ENCODE measurements at regions of chr10 and their contacts with region 1.

Region 1: GRCh38 chr10:91856637-91857036 is 52.6 kb downstream of the FGFBP3 start:
- DNase-seq: no peak
- H3K4me3 ChIP-seq: no peak overlapping the region
- H3K4me3 Mint-ChIP-seq: no peak overlapping the region
- H3K27ac ChIP-seq: no peak overlapping the region
- H3K27ac Mint-ChIP-seq: peak overlapping the region in 2 of 7 donors; percentile 51 to 65
- H3K4me1 ChIP-seq: no peaks in the 10 kb centered on the region
- H3K4me1 Mint-ChIP-seq: peaks cover 0 to 3% (median 0%) of the 10 kb centered on the region in 4 donors
- H3K27me3 ChIP-seq: no peaks in the 10 kb centered on the region
- H3K27me3 Mint-ChIP-seq: no peaks in the 10 kb centered on the region

Region 2: DNA sequence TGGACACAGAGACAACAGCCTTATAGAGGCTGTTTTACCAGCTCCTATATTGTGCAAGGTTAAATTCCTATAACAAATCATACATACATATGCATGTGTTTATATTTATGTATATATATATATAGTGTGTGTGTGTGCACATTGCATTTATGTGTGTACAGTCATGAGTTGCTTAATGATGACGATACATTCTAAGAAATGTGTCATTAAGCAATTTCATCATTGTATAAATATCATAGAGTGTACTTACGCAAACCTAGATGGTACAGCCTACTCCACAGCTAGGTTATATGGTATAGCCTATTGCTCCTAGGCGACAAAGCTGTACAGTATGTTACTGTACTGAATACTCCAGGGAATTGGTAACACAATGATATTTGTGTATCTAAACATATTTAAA is 88.5 kb before region 1 on chr10:
- CTCF ChIA-PET with region 1: no interaction called
- POLR2A ChIA-PET with region 1: no interaction called
- intact Hi-C with region 1: loop called (anchors 10 kb)
- DNase-seq: no peak
- H3K4me3 ChIP-seq: no peak overlapping the region
- H3K4me3 Mint-ChIP-seq: no peak overlapping the region
- H3K27ac ChIP-seq: no peak overlapping the region
- H3K27ac Mint-ChIP-seq: no peak overlapping the region
- H3K4me1 ChIP-seq: no peaks in the 10 kb centered on the region
- H3K4me1 Mint-ChIP-seq: no peaks in the 10 kb centered on the region
- H3K27me3 ChIP-seq: no peaks in the 10 kb centered on the region
- H3K27me3 Mint-ChIP-seq: no peaks in the 10 kb centered on the region

Region 3: DNA sequence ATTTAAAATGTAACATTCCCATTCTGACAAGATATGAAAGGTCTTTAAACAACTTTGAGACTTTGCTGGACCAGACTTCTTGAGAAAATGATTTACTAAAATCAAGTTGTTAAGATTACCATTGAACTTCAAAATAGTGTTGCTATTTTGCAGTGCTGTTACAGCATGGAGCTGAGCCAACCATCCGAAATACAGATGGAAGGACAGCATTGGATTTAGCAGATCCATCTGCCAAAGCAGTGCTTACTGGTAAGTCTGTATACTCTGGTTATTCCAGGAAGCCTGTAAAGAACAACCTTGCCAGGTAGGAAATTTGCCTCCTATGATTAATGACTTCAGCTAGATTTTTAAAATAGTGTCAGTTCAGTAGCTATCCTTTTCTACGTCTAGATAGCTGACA is 39.7 kb before region 1 on chr10:
- CTCF ChIA-PET with region 1: no interaction called
- POLR2A ChIA-PET with region 1: no interaction called
- intact Hi-C with region 1: loop called (anchors 5 kb)
- DNase-seq: no peak
- H3K4me3 ChIP-seq: no peak overlapping the region
- H3K4me3 Mint-ChIP-seq: no peak overlapping the region
- H3K27ac ChIP-seq: no peak overlapping the region
- H3K27ac Mint-ChIP-seq: peak overlapping the region in 1 of 7 donors; percentile 43
- H3K4me1 ChIP-seq: peaks cover 5% of the 10 kb centered on the region
- H3K4me1 Mint-ChIP-seq: peaks cover 13 to 27% (median 18%) of the 10 kb centered on the region in 4 donors
- H3K27me3 ChIP-seq: no peaks in the 10 kb centered on the region
- H3K27me3 Mint-ChIP-seq: no peaks in the 10 kb centered on the region

Measured in CD4-positive, alpha-beta memory T cell (primary cell).